Caco-2 (cell line): ENCODE measurements at regions of chrX and their contacts with region 1.

Region 1: GRCh38 chrX:68196939-68197791 is 236.1 kb downstream of the OPHN1 start:
- DNase-seq: peak; percentile 36 to 53
- H3K4me3 ChIP-seq: no peak overlapping the region
- H3K4me3 Mint-ChIP-seq: no peak overlapping the region
- H3K27ac Mint-ChIP-seq: no peak overlapping the region
- H3K4me1 ChIP-seq: no peaks in the 10 kb centered on the region; the same call in 1 of the 2 replicates
- H3K4me1 Mint-ChIP-seq: no peaks in the 10 kb centered on the region
- H3K27me3 ChIP-seq: no peaks in the 10 kb centered on the region
- H3K27me3 Mint-ChIP-seq: no peaks in the 10 kb centered on the region
- CTCF ChIP-seq: peak; percentile 42 to 59

Region 2: DNA sequence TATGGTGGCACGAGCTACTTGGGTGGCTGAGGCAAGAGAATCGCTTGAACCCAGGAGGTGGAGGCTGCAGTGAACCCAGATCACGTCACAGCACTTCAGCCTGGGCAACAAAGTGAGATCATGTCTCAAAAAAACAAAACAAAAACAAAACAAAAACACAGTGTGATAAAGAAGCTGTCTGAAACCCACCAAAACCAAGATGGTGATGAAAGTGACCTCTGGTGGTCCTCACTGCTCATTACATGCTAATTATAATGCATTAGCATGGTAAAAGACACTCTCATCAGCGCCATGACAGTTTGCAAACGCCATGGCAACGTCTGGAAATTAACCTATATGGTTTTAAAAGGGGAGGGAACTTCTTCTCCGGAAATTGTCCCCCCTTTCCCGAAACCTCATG is 265.5 kb after region 1 on chrX:
- CTCF ChIA-PET with region 1: no interaction called
- POLR2A ChIA-PET with region 1: no interaction called
- intact Hi-C with region 1: loop called (anchors 1 kb)
- DNase-seq: peak in 1 of 2 experiments; percentile 18
- H3K4me3 ChIP-seq: no peak overlapping the region
- H3K4me3 Mint-ChIP-seq: no peak overlapping the region
- H3K27ac Mint-ChIP-seq: no peak overlapping the region
- H3K4me1 ChIP-seq: peaks cover 14% of the 10 kb centered on the region
- H3K4me1 Mint-ChIP-seq: no peaks in the 10 kb centered on the region
- H3K27me3 ChIP-seq: no peaks in the 10 kb centered on the region
- H3K27me3 Mint-ChIP-seq: no peaks in the 10 kb centered on the region
- CTCF ChIP-seq: peak in 1 of 2 experiments; percentile 26

Region 3: GRCh38 chrX:68490599-68490998 is 293.4 kb after region 1 on chrX:
- CTCF ChIA-PET with region 1: interaction called, 8 read pairs
- POLR2A ChIA-PET with region 1: no interaction called
- intact Hi-C with region 1: loop called (anchors 1 kb)
- DNase-seq: peak in 1 of 2 experiments; percentile 39
- H3K4me3 ChIP-seq: no peak overlapping the region
- H3K4me3 Mint-ChIP-seq: no peak overlapping the region
- H3K27ac Mint-ChIP-seq: no peak overlapping the region
- H3K4me1 ChIP-seq: peaks cover 19% of the 10 kb centered on the region
- H3K4me1 Mint-ChIP-seq: peaks cover 6% of the 10 kb centered on the region
- H3K27me3 ChIP-seq: no peaks in the 10 kb centered on the region
- H3K27me3 Mint-ChIP-seq: no peaks in the 10 kb centered on the region
- CTCF ChIP-seq: peak in 1 of 2 experiments; percentile 55

Region 4: GRCh38 chrX:68511255-68511654 is 314.1 kb after region 1 on chrX:
- CTCF ChIA-PET with region 1: no interaction called
- POLR2A ChIA-PET with region 1: no interaction called
- intact Hi-C with region 1: loop called (anchors 1 kb)
- DNase-seq: peak in 1 of 2 experiments; percentile 55
- H3K4me3 ChIP-seq: no peak overlapping the region
- H3K4me3 Mint-ChIP-seq: no peak overlapping the region
- H3K27ac Mint-ChIP-seq: no peak overlapping the region
- H3K4me1 ChIP-seq: no peaks in the 10 kb centered on the region
- H3K4me1 Mint-ChIP-seq: peaks cover 7% of the 10 kb centered on the region
- H3K27me3 ChIP-seq: no peaks in the 10 kb centered on the region
- H3K27me3 Mint-ChIP-seq: no peaks in the 10 kb centered on the region
- CTCF ChIP-seq: peak; percentile 63 to 66

Region 5: GRCh38 chrX:68646421-68646820 is 449.3 kb after region 1 on chrX:
- CTCF ChIA-PET with region 1: no interaction called
- POLR2A ChIA-PET with region 1: no interaction called
- intact Hi-C with region 1: no loop called
- DNase-seq: no peak
- H3K4me3 ChIP-seq: no peak overlapping the region
- H3K4me3 Mint-ChIP-seq: no peak overlapping the region
- H3K27ac Mint-ChIP-seq: no peak overlapping the region
- H3K4me1 ChIP-seq: no peaks in the 10 kb centered on the region
- H3K4me1 Mint-ChIP-seq: no peaks in the 10 kb centered on the region
- H3K27me3 ChIP-seq: no peaks in the 10 kb centered on the region
- H3K27me3 Mint-ChIP-seq: peaks cover 5% of the 10 kb centered on the region
- CTCF ChIP-seq: no peak

Region 6: DNA sequence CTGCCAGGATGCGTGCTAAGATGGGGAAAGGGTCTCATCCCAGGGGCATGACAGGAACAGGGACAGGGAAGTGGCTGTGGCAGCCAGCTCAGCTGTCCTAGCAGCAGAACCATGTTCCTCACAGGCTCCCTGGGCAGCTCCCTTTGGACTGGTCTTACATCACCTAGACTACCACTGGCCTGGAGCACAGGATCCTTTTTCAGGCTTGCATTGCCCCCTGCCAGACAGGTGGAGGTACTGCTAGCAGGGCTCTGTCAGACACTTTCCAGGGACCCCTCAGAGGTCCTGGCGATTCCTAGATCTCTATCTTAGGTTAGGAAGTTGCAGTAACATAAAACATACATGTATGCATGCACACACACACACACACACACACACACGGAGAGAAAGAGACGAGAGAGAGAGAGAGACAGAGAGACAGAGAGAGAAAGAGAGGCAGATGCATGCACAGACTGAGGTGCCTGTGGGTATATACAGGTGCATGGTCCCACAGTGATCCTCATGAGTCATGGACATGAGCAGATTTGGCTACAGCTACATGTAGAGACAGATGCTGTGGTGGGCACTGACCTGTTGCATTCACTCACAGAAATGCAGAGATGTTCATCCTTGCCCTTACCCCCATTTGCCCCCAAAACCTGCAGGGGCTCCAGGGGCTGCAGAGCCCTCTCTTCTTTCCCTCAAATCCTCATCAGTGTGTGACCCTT is 513.9 kb after region 1 on chrX:
- CTCF ChIA-PET with region 1: interaction called, 23 read pairs
- POLR2A ChIA-PET with region 1: no interaction called
- intact Hi-C with region 1: loop called (anchors 1 kb)
- DNase-seq: peak; percentile 62 to 63
- H3K4me3 ChIP-seq: no peak overlapping the region
- H3K4me3 Mint-ChIP-seq: no peak overlapping the region
- H3K27ac Mint-ChIP-seq: no peak overlapping the region
- H3K4me1 ChIP-seq: no peaks in the 10 kb centered on the region
- H3K4me1 Mint-ChIP-seq: peaks cover 7% of the 10 kb centered on the region
- H3K27me3 ChIP-seq: no peaks in the 10 kb centered on the region
- H3K27me3 Mint-ChIP-seq: peaks cover 5% of the 10 kb centered on the region
- CTCF ChIP-seq: peak; percentile 63 to 72

Region 7: DNA sequence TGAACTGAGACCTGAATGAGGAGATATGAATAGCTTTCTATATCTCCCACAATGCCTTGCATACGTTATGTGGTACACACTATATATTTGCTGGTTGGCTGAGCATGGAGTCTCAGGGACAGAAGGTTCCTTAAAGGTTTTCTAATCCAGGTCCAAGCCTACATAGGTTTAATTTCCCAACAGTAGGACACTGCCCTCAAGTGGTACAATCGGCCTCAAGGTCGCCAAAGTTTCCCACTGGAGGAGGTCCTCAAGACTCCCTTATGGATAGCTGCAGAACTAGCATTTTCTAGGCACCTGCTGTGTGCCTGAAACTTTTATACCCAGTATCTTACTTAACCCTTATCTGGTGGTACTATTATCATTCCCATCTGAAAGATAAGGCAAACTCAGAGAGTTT is 610.7 kb after region 1 on chrX:
- CTCF ChIA-PET with region 1: no interaction called
- POLR2A ChIA-PET with region 1: no interaction called
- intact Hi-C with region 1: loop called (anchors 5 kb)
- DNase-seq: peak in 1 of 2 experiments; percentile 26
- H3K4me3 ChIP-seq: no peak overlapping the region
- H3K4me3 Mint-ChIP-seq: no peak overlapping the region
- H3K27ac Mint-ChIP-seq: no peak overlapping the region
- H3K4me1 ChIP-seq: no peaks in the 10 kb centered on the region
- H3K4me1 Mint-ChIP-seq: peaks cover 6% of the 10 kb centered on the region
- H3K27me3 ChIP-seq: no peaks in the 10 kb centered on the region
- H3K27me3 Mint-ChIP-seq: peaks cover 2% of the 10 kb centered on the region
- CTCF ChIP-seq: peak; percentile 31 to 40